K562 (cell line): ENCODE measurements at regions of chr1 and their contacts with region 1.

Region 1: GRCh38 chr1:248807067-248807737 is 18.5 kb downstream of the SH3BP5L start:
- DNase-seq: peak; percentile 70 to 77 (median 74)
- ATAC-seq: peak; percentile 95
- H3K4me3 ChIP-seq: no peak overlapping the region
- H3K27ac ChIP-seq: no peak overlapping the region
- H3K4me1 ChIP-seq: peaks cover 11 to 15% of the 10 kb centered on the region in 2 experiments; a peak in 3 of 5 replicates
- H3K27me3 ChIP-seq: peaks cover 0 to 10% of the 10 kb centered on the region in 2 experiments; a peak in 2 of 5 replicates
- CTCF ChIP-seq: peak; percentile 88 to 94 (median 92)
- EP300 ChIP-seq: no peak
- POLR2A ChIP-seq: no peak
- RAD21 ChIP-seq: peak; percentile 96 to 98

Region 2: GRCh38 chr1:247833601-247834000 is 973.6 kb before region 1 on chr1:
- CTCF ChIA-PET with region 1: interaction called, 5 read pairs
- POLR2A ChIA-PET with region 1: no interaction called
- in situ Hi-C with region 1: no loop called
- intact Hi-C with region 1: loop called (anchors 5 kb)
- DNase-seq: peak in 2 of 4 experiments; percentile 39 to 55
- ATAC-seq: peak; percentile 91
- H3K4me3 ChIP-seq: no peak overlapping the region
- H3K27ac ChIP-seq: no peak overlapping the region
- H3K4me1 ChIP-seq: no peaks in the 10 kb centered on the region
- H3K27me3 ChIP-seq: peaks cover 0 to 14% of the 10 kb centered on the region in 2 experiments; a peak in 1 of 5 replicates
- CTCF ChIP-seq: peak; percentile 64 to 95 (median 87)
- EP300 ChIP-seq: no peak
- POLR2A ChIP-seq: no peak
- RAD21 ChIP-seq: peak; percentile 65 to 80

Region 3: DNA sequence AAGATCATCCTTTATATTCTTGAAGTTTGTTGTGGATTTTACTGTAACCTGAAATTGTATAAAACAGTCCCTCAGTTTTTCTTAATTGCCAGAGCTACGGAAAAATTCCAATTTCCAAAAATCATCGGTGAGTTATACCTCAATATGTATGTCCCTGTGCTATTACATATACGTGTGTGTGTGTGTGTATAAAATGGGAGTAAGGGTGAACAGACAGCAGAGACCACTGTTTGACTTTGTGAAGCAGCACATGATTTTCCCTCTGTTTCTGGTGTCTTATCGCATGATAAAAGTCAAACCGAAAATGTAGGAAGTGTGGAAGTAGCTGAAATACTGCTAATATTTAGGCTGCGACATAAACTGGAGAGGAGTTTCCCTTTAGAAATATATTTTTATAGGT is 403.2 kb before region 1 on chr1:
- CTCF ChIA-PET with region 1: interaction called, 39 read pairs
- POLR2A ChIA-PET with region 1: no interaction called
- in situ Hi-C with region 1: no loop called
- intact Hi-C with region 1: loop called (anchors 1 kb)
- DNase-seq: peak; percentile 9 to 86 (median 66)
- ATAC-seq: no peak
- H3K4me3 ChIP-seq: no peak overlapping the region
- H3K27ac ChIP-seq: no peak overlapping the region
- H3K4me1 ChIP-seq: no peaks in the 10 kb centered on the region
- H3K27me3 ChIP-seq: no peaks in the 10 kb centered on the region
- CTCF ChIP-seq: peak; percentile 14 to 44 (median 43); a peak in 2 of 6 replicates
- EP300 ChIP-seq: no peak
- POLR2A ChIP-seq: no peak
- RAD21 ChIP-seq: no peak

Region 4: GRCh38 chr1:248697907-248698306 is 109.3 kb before region 1 on chr1:
- CTCF ChIA-PET with region 1: interaction called, 9 read pairs
- POLR2A ChIA-PET with region 1: no interaction called
- in situ Hi-C with region 1: no loop called
- intact Hi-C with region 1: loop called (anchors 1 kb)
- DNase-seq: no peak
- ATAC-seq: peak; percentile 53; the same call in 1 of the 3 replicates
- H3K4me3 ChIP-seq: no peak overlapping the region
- H3K27ac ChIP-seq: no peak overlapping the region
- H3K4me1 ChIP-seq: no peaks in the 10 kb centered on the region
- H3K27me3 ChIP-seq: no peaks in the 10 kb centered on the region
- CTCF ChIP-seq: 0 out of 6 replicates have a peak, but pooled peaks of 1 of the 3 experiments have one; percentile 19
- EP300 ChIP-seq: no peak
- POLR2A ChIP-seq: no peak
- RAD21 ChIP-seq: peak in 1 of 2 experiments; percentile 43; a peak in 2 of 4 replicates

Region 5: DNA sequence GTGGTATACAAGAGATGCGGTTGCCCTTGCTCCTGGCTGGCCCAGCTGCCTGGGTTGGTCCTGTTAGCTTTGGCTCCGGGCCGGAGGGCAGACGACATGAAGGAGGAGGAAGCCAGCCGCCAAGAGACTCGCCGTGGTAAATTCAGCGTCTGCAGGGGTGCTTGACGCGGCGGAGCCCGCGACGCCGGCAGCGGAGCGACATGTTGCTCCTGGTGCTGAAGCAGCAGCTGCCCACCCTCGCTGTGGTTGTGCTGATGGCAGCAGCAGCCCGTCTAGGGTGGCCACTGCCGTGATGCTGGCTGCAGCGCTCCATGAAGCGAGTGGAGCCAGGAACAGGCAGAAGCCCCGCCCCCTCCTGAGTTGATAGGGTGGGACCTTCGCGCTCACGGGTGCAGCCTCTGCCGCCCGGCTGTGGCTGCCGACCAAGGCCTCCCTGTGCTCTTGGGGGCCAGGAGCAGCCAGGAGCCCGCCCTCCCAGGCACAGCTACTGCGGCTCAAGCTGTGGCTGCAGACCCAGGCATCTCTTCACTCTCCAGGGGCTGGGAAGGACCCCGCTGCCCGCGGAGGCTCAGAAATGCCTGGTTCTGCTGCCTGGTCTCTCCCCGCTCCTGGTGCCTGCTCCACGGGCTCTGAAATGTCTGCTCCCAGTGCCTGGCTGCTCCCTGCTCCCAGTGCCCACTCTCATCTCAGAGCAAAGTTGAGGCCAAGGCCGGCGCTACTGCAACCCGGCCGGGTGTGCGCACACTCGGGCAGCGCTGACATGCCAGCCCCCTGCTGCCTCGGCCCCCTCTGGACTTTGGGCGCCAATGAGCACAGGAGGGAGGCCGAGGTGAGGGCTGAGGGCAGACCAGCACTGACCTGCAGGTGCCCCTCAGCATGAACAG is 56.0 kb after region 1 on chr1:
- CTCF ChIA-PET with region 1: no interaction called
- POLR2A ChIA-PET with region 1: no interaction called
- in situ Hi-C with region 1: no loop called
- intact Hi-C with region 1: no loop called
- DNase-seq: peak; percentile 67 to 87 (median 72)
- ATAC-seq: peak; percentile 69
- H3K4me3 ChIP-seq: peak overlapping the region; percentile 42
- H3K27ac ChIP-seq: no peak overlapping the region; the same call in 2 of the 3 replicates
- H3K4me1 ChIP-seq: peaks cover 26 to 31% of the 10 kb centered on the region in 2 experiments
- H3K27me3 ChIP-seq: no peaks in the 10 kb centered on the region
- CTCF ChIP-seq: no peak
- EP300 ChIP-seq: no peak
- POLR2A ChIP-seq: peak; percentile 61
- RAD21 ChIP-seq: no peak